Activated CD8-positive, alpha-beta T cell treated with anti-CD3 and anti-CD28 coated beads, Interleukin-2, amount 10 ng/mL, durations not matched to agents 7 days and 5 days (primary cell): ENCODE measurements at regions of chr14 and their contacts with region 1.

Region 1: GRCh38 chr14:54566410-54567223 is at the start of gene SAMD4A:
- DNase-seq: peak; percentile 75
- ATAC-seq: peak; percentile 45
- H3K4me3 Mint-ChIP-seq: peak within 1 kb of the TSS; percentile 94
- H3K27ac Mint-ChIP-seq: peak within 1 kb of the TSS; percentile 87
- H3K4me1 Mint-ChIP-seq: peaks cover 23% of the 10 kb centered on the region
- H3K27me3 Mint-ChIP-seq: peaks cover 21% of the 10 kb centered on the region
- total RNA-seq, gene SAMD4A: 3.6 to 3.9 TPM

Region 2: GRCh38 chr14:54642801-54643697 is 76.4 kb after region 1 on chr14:
- CTCF ChIA-PET with region 1: interaction called, 11 read pairs
- POLR2A ChIA-PET with region 1: no interaction called
- DNase-seq: no peak
- ATAC-seq: no peak
- H3K4me3 Mint-ChIP-seq: no peak overlapping the region
- H3K27ac Mint-ChIP-seq: no peak overlapping the region
- H3K4me1 Mint-ChIP-seq: peaks cover 5% of the 10 kb centered on the region
- H3K27me3 Mint-ChIP-seq: no peaks in the 10 kb centered on the region

Region 3: GRCh38 chr14:54691525-54692283 is 125.1 kb after region 1 on chr14:
- CTCF ChIA-PET with region 1: interaction called, 10 read pairs
- POLR2A ChIA-PET with region 1: no interaction called
- DNase-seq: peak; percentile 53
- ATAC-seq: peak; percentile 69
- H3K4me3 Mint-ChIP-seq: no peak overlapping the region
- H3K27ac Mint-ChIP-seq: no peak overlapping the region
- H3K4me1 Mint-ChIP-seq: peaks cover 28% of the 10 kb centered on the region
- H3K27me3 Mint-ChIP-seq: peaks cover 31% of the 10 kb centered on the region

Region 4: DNA sequence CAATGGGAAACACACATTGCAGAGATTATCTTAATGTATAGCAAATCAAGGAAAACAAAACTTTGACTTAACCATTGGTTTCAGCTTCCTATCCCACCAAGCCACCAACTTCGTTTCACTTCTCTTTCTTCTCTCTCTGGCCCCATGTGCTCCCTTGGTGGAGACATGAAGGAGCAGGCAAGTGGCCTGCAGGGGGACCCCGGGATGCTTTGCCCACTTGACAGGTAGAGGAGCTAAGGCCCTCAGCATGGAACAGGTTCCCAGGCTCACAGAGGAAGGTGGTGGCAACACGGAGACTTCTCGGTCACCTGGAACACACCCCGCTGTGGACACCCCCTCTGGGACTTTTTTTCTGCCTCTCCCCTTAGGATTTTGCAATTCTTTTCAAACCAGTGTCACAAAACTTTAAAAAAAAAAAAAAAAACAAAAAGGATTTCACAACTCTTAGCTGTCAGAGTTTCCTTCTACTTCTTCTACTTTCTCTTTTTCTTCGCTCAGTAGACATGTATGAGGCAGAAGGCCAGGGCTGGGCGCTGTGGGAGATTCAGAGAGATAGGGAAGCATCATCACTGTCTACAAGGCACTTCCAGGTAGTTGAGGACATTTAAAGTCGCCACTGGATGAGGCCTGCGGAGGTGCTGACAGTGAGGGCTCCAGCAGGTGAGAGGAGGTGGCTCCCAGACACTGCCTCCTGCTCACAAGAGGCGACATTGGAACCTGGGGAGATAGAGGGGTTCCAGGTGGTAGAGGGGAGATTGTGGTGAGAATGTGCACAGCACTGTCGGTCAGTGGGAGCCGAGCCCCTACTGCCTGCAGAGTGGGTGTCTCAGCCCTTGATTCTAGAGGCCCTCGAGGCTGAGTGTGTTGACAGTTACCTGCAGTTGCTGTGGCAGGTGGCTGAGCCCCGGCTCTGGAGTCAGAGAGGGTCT is 216.4 kb after region 1 on chr14:
- CTCF ChIA-PET with region 1: interaction called, 318 read pairs
- POLR2A ChIA-PET with region 1: no interaction called
- DNase-seq: peak; percentile 44
- ATAC-seq: peak; percentile 62
- H3K4me3 Mint-ChIP-seq: no peak overlapping the region
- H3K27ac Mint-ChIP-seq: no peak overlapping the region
- H3K4me1 Mint-ChIP-seq: peaks cover 28% of the 10 kb centered on the region
- H3K27me3 Mint-ChIP-seq: peaks cover 2% of the 10 kb centered on the region